Activated CD4-positive, alpha-beta T cell treated with anti-CD3 and anti-CD28 coated beads for 36 hours (primary cell): ENCODE measurements at regions of chr12 and their contacts with region 1.

Region 1: GRCh38 chr12:46268590-46269558 is at the start of gene SLC38A1:
- DNase-seq: peak; percentile 94
- ATAC-seq: peak; percentile 61
- H3K4me3 Mint-ChIP-seq: no peak within 1 kb of the TSS
- H3K27ac Mint-ChIP-seq: no peak within 1 kb of the TSS
- H3K4me1 Mint-ChIP-seq: peaks cover 30% of the 10 kb centered on the region
- H3K27me3 Mint-ChIP-seq: no peaks in the 10 kb centered on the region
- total RNA-seq, gene SLC38A1: 167 to 180 TPM

Region 2: GRCh38 chr12:46209914-46210872 is 58.7 kb before region 1 on chr12:
- CTCF ChIA-PET with region 1: interaction called, 8 read pairs
- POLR2A ChIA-PET with region 1: interaction called, 88 read pairs
- intact Hi-C with region 1: loop called (anchors 1 kb)
- DNase-seq: peak; percentile 88
- ATAC-seq: peak; percentile 71
- H3K4me3 Mint-ChIP-seq: peak overlapping the region; percentile 58
- H3K27ac Mint-ChIP-seq: peak overlapping the region; percentile 97
- H3K4me1 Mint-ChIP-seq: peaks cover 79% of the 10 kb centered on the region
- H3K27me3 Mint-ChIP-seq: no peaks in the 10 kb centered on the region

Region 3: DNA sequence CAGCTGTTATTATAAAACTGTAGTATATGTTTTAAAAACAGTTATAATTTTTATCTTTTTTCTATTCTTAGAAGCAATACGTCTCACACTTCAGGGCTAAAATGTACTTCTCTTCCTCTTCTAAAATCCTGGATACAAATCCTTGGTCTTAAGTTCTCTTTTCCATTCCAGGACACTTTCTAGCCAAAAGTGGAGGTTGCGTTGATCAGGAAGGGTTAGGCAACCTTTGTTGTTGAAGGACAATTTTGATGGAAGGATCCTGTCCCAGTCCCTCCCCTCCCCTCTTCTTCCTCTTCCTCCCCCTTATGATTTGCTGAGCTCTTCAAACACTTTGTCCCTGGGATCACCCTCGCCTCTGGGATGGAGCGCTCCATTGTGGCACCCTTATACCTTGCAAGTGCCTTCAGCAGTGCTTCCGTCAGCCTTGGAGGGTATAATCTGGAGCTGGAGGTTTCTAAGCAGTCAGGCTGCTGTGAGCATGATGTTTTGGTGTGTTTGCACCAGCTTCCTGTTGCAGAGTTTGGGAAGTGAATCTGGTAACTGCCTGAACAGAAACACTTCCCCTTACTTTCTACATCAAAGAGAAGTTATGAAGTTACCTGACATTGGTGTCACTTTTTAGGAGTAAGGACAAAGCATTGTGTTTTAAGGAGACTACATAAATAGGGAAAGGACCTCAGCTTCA is 191.1 kb after region 1 on chr12:
- CTCF ChIA-PET with region 1: no interaction called
- POLR2A ChIA-PET with region 1: no interaction called
- intact Hi-C with region 1: loop called in 1 of 2 experiments (anchors 5 kb)
- DNase-seq: peak; percentile 17
- ATAC-seq: no peak
- H3K4me3 Mint-ChIP-seq: peak overlapping the region; percentile 46
- H3K27ac Mint-ChIP-seq: peak overlapping the region; percentile 88
- H3K4me1 Mint-ChIP-seq: peaks cover 56% of the 10 kb centered on the region
- H3K27me3 Mint-ChIP-seq: no peaks in the 10 kb centered on the region

Region 4: GRCh38 chr12:47216150-47216677 is 947.3 kb after region 1 on chr12:
- CTCF ChIA-PET with region 1: no interaction called
- POLR2A ChIA-PET with region 1: no interaction called
- intact Hi-C with region 1: loop called (anchors 2 to 5 kb)
- DNase-seq: peak; percentile 81
- ATAC-seq: peak; percentile 43
- H3K4me3 Mint-ChIP-seq: peak overlapping the region; percentile 89
- H3K27ac Mint-ChIP-seq: peak overlapping the region; percentile 96
- H3K4me1 Mint-ChIP-seq: peaks cover 38% of the 10 kb centered on the region
- H3K27me3 Mint-ChIP-seq: no peaks in the 10 kb centered on the region